ENCODE measurements at regions of chr6 and their contacts with region 1.

Region 1: GRCh38 chr6:18323935-18324705 is 59.8 kb upstream of the DEK start:
- DNase-seq: peak; percentile 12
- H3K4me3 Mint-ChIP-seq: no peak overlapping the region
- H3K27ac Mint-ChIP-seq: no peak overlapping the region
- H3K4me1 Mint-ChIP-seq: peaks cover 6% of the 10 kb centered on the region
- H3K27me3 Mint-ChIP-seq: no peaks in the 10 kb centered on the region

Region 2: GRCh38 chr6:18387061-18387721 is 63.1 kb after region 1 on chr6 and contains the start of gene RNF144B:
- CTCF ChIA-PET with region 1: interaction called, 10 read pairs
- intact Hi-C with region 1: loop called (anchors 2 kb)
- DNase-seq: peak; percentile 77
- H3K4me3 Mint-ChIP-seq: peak within 1 kb of the TSS; percentile 86
- H3K27ac Mint-ChIP-seq: peak within 1 kb of the TSS; percentile 32
- H3K4me1 Mint-ChIP-seq: peaks cover 25% of the 10 kb centered on the region
- H3K27me3 Mint-ChIP-seq: no peaks in the 10 kb centered on the region
- total RNA-seq, gene RNF144B: 1.5 to 3.2 TPM

Region 3: GRCh38 chr6:18823782-18824386 is 499.8 kb after region 1 on chr6:
- CTCF ChIA-PET with region 1: no interaction called
- intact Hi-C with region 1: loop called (anchors 5 kb)
- DNase-seq: peak; percentile 61
- H3K4me3 Mint-ChIP-seq: no peak overlapping the region
- H3K27ac Mint-ChIP-seq: no peak overlapping the region
- H3K4me1 Mint-ChIP-seq: no peaks in the 10 kb centered on the region
- H3K27me3 Mint-ChIP-seq: no peaks in the 10 kb centered on the region

Measured in activated naive CD4-positive, alpha-beta T cell treated with anti-CD3 and anti-CD28 coated beads for 36 hours (primary cell).